Adrenal gland (tissue), 19 donors: ENCODE measurements at regions of chr3 and their contacts with region 1.

Region 1: GRCh38 chr3:112642912-112643506 is 2.1 kb upstream of the CCDC80 start:
- DNase-seq: peak; percentile 81 to 94 (median 88)
- H3K4me3 ChIP-seq: peak overlapping the region in 1 of 4 donors; percentile 24
- H3K27ac ChIP-seq: no peak overlapping the region
- H3K4me1 ChIP-seq: peaks cover 10 to 34% of the 10 kb centered on the region in 2 donors
- H3K27me3 ChIP-seq: peaks cover 3% of the 10 kb centered on the region
- CTCF ChIP-seq: peak; percentile 58 to 87 (median 82)
- POLR2A ChIP-seq: no peak

Region 2: DNA sequence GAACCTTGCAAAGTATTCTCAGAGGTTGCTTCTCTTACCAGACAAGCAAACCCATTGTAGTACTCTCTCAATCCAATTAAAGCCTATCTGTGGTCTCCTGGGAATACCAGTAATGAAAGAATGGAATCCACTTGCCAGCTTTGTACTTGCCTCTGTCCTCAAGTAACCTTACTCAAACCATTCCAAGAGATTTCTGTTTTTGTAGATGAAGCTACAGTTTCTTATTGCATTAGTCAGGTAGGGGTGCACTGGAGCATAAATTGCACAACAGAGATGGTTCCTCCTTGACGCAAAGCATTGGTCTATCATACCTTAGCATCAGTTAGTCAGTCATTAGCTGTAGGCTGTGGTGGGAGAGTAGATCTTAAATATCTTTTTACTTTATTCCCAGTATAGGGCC is 196.7 kb before region 1 on chr3:
- intact Hi-C with region 1: no loop called
- DNase-seq: no peak
- H3K4me3 ChIP-seq: no peak overlapping the region
- H3K27ac ChIP-seq: no peak overlapping the region
- H3K4me1 ChIP-seq: no peaks in the 10 kb centered on the region
- H3K27me3 ChIP-seq: no peaks in the 10 kb centered on the region
- CTCF ChIP-seq: no peak
- POLR2A ChIP-seq: no peak

Region 3: GRCh38 chr3:112582244-112582874 is 60.6 kb before region 1 on chr3:
- intact Hi-C with region 1: loop called in 1 of 2 experiments (anchors 10 kb)
- DNase-seq: peak in 3 of 7 donors; percentile 20 to 30 (median 26)
- H3K4me3 ChIP-seq: no peak overlapping the region
- H3K27ac ChIP-seq: no peak overlapping the region
- H3K4me1 ChIP-seq: no peaks in the 10 kb centered on the region
- H3K27me3 ChIP-seq: no peaks in the 10 kb centered on the region
- CTCF ChIP-seq: peak; percentile 43 to 69 (median 52)
- POLR2A ChIP-seq: no peak

Region 4: DNA sequence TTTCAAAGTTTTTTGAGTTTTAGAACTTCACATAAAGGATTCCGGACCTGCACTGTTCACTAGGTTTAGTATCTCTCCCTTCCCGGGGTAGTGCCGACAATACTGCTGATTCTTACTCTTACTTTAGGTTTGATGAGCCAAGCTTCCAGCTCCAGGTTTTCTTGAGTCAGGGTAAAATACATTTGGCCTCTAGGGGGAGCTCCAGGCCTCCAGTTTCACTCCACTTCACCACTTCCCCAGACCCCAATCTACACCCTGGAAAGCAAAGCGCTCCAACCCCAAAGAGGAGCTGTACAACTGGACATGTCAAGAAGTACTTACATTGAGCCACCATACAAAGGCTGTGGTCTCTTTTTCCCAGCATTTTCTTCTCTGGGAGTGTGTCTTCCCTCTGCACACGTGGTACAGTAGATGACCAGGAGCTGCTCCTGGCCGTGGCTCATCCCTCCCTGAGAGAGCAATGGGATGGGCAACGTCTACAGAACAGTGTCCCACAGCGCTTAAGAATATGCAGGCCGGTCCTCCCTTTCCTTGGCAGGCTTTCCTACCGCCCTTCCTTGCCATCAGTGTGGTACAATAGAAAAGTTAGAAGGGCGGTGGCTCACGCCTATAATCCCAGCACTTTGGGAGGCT is 91.8 kb after region 1 on chr3:
- intact Hi-C with region 1: no loop called
- DNase-seq: peak; percentile 42 to 74 (median 50)
- H3K4me3 ChIP-seq: no peak overlapping the region
- H3K27ac ChIP-seq: no peak overlapping the region
- H3K4me1 ChIP-seq: no peaks in the 10 kb centered on the region
- H3K27me3 ChIP-seq: no peaks in the 10 kb centered on the region
- CTCF ChIP-seq: peak; percentile 52 to 74 (median 65)
- POLR2A ChIP-seq: no peak

Region 5: GRCh38 chr3:112814266-112814665 is 171.3 kb after region 1 on chr3:
- intact Hi-C with region 1: loop called (anchors 10 kb)
- DNase-seq: no peak
- H3K4me3 ChIP-seq: no peak overlapping the region
- H3K27ac ChIP-seq: peak overlapping the region in 1 of 5 donors; percentile 36
- H3K4me1 ChIP-seq: peaks cover 0 to 8% of the 10 kb centered on the region in 2 donors
- H3K27me3 ChIP-seq: no peaks in the 10 kb centered on the region
- CTCF ChIP-seq: peak in 5 of 6 experiments; percentile 19 to 52 (median 44)
- POLR2A ChIP-seq: no peak

Region 6: DNA sequence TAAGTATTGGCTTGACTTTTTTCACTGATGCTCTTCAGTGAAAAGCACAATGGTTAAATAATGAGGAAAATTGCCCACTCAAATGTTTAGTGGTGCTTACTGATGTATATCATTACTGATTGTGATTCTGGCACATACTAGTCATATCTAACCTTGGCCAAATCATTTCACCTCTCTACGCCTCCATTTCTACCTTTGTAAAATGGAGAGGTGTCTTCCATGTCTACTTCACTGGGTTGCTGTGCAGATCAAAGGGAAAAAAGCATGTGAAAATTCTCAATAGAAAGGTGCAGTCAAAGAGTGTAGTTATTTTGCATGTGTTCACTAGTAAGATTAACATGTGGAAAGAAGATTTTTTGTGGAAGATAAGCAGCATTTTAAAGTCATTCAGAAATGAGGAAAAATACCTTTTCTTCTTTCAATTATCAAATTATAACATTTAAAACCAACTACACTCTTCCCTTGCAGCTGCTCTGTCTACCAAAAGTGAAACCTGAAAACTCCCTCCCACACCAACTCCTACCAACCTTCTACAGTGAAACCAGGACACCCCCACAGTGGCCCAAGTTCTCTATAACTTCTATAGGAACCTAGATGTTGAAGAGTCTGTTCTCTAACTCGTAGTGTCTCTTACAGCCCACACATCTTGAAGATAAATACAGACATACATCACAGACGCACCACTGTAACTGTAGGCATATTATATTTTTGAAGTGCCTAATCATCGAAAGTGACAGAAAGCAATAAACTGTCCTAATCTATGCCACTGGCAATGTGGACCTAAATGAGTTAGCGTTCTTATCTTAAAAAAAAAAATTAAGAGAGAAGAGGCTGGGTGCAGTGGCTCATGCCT is 330.5 kb after region 1 on chr3:
- intact Hi-C with region 1: loop called in 1 of 2 experiments (anchors 5 kb)
- DNase-seq: no peak
- H3K4me3 ChIP-seq: peak overlapping the region in 1 of 4 donors; percentile 31
- H3K27ac ChIP-seq: no peak overlapping the region
- H3K4me1 ChIP-seq: no peaks in the 10 kb centered on the region
- H3K27me3 ChIP-seq: no peaks in the 10 kb centered on the region
- CTCF ChIP-seq: no peak
- POLR2A ChIP-seq: no peak

Region 7: DNA sequence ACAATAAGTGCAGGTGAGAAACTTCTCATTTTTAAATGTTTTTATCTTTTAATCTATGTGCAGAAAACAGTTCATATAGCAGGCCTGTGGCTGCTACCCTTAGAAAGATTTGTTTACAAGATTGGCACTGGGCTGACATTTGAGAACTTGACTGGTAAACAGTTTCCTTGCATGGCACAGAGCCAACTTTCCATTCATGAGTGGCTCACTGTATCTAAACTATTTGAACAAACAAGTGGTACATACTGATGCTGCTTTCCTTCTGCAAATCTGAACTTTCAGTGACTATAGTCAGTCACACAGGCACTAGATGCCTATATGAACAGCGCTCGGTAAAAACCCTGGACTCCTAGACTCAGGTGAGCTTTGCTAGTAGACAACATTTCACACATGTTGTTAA is 341.5 kb after region 1 on chr3:
- intact Hi-C with region 1: loop called in 1 of 2 experiments (anchors 10 kb)
- DNase-seq: peak in 2 of 7 donors; percentile 19 to 20
- H3K4me3 ChIP-seq: no peak overlapping the region
- H3K27ac ChIP-seq: no peak overlapping the region
- H3K4me1 ChIP-seq: no peaks in the 10 kb centered on the region
- H3K27me3 ChIP-seq: no peaks in the 10 kb centered on the region
- CTCF ChIP-seq: no peak
- POLR2A ChIP-seq: no peak